ENCODE measurements at regions of chr7 and their contacts with region 1.

Region 1: GRCh38 chr7:137909037-137909436 is 62.3 kb upstream of the DGKI start:
- DNase-seq: no peak
- CTCF ChIP-seq: no peak

Region 2: GRCh38 chr7:138002096-138002827 is 93.2 kb after region 1 on chr7:
- in situ Hi-C with region 1: loop called (anchors 5 kb)
- DNase-seq: peak; percentile 94
- CTCF ChIP-seq: peak; percentile 78

Region 3: DNA sequence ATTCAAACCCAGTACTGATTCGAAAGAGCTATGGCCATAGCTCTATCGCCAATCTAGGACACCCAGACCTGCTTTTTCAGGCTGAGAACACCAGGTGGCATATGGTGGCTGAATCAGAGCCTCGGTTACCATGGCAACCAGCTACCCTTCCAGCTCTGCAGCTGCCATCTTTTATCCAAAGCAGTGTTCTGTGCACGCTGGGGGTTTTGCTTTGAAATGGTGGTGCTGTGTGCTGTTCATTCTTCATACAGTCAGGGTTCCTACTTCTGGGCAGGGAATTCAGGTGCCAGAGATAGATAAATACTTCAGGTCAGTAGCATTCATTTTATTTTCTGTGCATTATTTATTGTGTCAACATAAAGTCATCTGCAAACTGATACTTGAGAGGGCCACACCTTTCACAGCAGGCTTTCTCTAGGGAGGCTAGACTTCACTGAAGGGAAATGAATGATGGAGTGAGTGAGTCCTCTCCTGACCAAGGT is 252.6 kb after region 1 on chr7:
- in situ Hi-C with region 1: no loop called
- DNase-seq: peak; percentile 86
- CTCF ChIP-seq: peak; percentile 55

Region 4: GRCh38 chr7:138388673-138389491 is 479.8 kb after region 1 on chr7:
- in situ Hi-C with region 1: no loop called
- DNase-seq: no peak
- CTCF ChIP-seq: no peak

Region 5: DNA sequence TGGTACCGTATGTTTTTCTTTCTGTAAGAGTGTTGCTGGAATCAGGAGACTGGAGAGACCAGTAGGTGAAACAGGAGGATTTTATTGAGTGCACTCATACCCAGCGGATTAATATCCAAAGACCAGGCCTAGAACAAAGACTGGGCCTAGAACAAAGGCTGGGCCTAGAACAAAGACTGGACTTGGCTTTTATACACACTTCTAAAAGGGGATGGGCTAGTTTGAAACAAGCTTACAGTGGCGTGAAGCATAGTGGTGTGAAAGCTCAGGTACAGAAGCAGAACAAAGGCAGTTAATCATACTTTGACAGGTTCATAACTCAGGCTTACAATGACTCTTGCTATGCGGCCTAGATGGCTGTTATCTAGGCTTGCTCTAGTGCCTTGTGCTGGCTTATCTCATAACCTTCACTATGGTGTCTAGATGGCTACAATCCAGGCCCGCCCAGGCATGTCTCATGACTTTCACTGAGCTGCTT is 618.7 kb after region 1 on chr7:
- in situ Hi-C with region 1: no loop called
- DNase-seq: no peak
- CTCF ChIP-seq: no peak